Mammary epithelial cell (primary cell): ENCODE measurements at regions of chr19 and their contacts with region 1.

Region 1: DNA sequence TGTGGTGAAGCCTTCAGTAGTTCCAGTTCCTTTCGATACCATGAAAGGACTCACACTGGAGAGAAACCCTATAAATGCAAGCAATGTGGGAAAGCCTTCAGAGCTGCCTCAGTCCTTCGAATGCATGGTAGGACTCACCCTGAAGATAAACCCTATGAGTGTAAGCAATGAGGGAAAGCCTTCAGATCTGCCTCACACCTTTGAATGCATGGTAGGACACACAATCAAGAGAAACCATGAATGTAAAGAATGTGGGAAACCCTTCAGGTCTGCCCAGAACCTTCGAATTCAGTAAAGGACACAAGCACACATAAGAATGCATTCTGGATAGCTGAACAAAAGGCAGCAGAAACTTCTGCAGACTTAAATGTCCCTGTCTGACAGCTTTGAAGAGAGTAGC is 18.3 kb downstream of the ZNF69 start:
- DNase-seq: no peak
- H3K4me3 ChIP-seq: no peak overlapping the region
- H3K27ac ChIP-seq: no peak overlapping the region
- H3K4me1 ChIP-seq: no peaks in the 10 kb centered on the region
- H3K27me3 ChIP-seq: no peaks in the 10 kb centered on the region
- CTCF ChIP-seq: no peak

Region 2: GRCh38 chr19:11814029-11814699 is 91.8 kb before region 1 on chr19 and contains the start of gene ZNF440:
- CTCF ChIA-PET with region 1: no interaction called
- dilution Hi-C with region 1: no loop called
- in situ Hi-C with region 1: no loop called
- intact Hi-C with region 1: no loop called
- DNase-seq: peak; percentile 92
- H3K4me3 ChIP-seq: peak within 1 kb of the TSS; percentile 95 to 97 (median 97)
- H3K27ac ChIP-seq: peak within 1 kb of the TSS; percentile 72
- H3K4me1 ChIP-seq: no peaks in the 10 kb centered on the region
- H3K27me3 ChIP-seq: no peaks in the 10 kb centered on the region
- CTCF ChIP-seq: no peak
- total RNA-seq, gene ZNF440: 8.3 to 10.4 TPM

Region 3: GRCh38 chr19:11924886-11925650 is 19.1 kb after region 1 on chr19 and contains the start of gene ZNF700:
- CTCF ChIA-PET with region 1: no interaction called
- dilution Hi-C with region 1: no loop called
- in situ Hi-C with region 1: no loop called
- intact Hi-C with region 1: no loop called
- DNase-seq: peak; percentile 89
- H3K4me3 ChIP-seq: peak within 1 kb of the TSS; percentile 75 to 91 (median 79)
- H3K27ac ChIP-seq: peak within 1 kb of the TSS; percentile 65
- H3K4me1 ChIP-seq: peaks cover 6% of the 10 kb centered on the region
- H3K27me3 ChIP-seq: no peaks in the 10 kb centered on the region
- CTCF ChIP-seq: no peak
- total RNA-seq, gene ZNF700: 8.2 to 10.4 TPM

Region 4: GRCh38 chr19:11995174-11995573 is 89.2 kb after region 1 on chr19:
- CTCF ChIA-PET with region 1: no interaction called
- dilution Hi-C with region 1: loop called (anchors 5 kb)
- in situ Hi-C with region 1: no loop called
- intact Hi-C with region 1: no loop called
- DNase-seq: no peak
- H3K4me3 ChIP-seq: no peak overlapping the region
- H3K27ac ChIP-seq: no peak overlapping the region
- H3K4me1 ChIP-seq: no peaks in the 10 kb centered on the region
- H3K27me3 ChIP-seq: no peaks in the 10 kb centered on the region
- CTCF ChIP-seq: no peak